ENCODE measurements at regions of chr4 and their contacts with region 1.

Region 1: GRCh38 chr4:10403633-10404445 is 53.4 kb downstream of the ZNF518B start:
- DNase-seq: peak; percentile 27
- H3K4me3 ChIP-seq: no peak overlapping the region
- H3K27ac ChIP-seq: no peak overlapping the region
- H3K4me1 ChIP-seq: no peaks in the 10 kb centered on the region
- H3K27me3 ChIP-seq: no peaks in the 10 kb centered on the region
- CTCF ChIP-seq: peak; percentile 31

Region 2: DNA sequence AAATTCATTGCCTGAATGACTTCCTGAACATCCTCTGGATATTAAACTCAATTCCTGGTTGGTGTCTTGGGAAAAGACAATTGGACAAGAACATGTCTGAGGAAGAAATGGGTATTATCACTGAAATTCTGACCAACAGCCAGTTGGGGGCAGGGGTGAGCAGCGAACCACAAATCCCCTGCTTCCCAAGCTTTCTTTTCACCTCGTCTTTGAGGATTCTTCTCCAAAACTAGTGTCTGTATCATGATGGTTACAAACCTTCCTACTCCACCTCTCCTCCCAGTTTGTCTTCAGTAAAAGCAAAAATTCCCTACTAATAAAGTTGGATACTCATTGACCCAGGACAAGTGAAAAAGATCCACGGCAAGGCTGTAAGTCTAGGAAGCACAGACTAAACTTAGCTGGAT is 239.0 kb before region 1 on chr4:
- intact Hi-C with region 1: loop called (anchors 10 kb)
- DNase-seq: peak; percentile 51
- H3K4me3 ChIP-seq: no peak overlapping the region
- H3K27ac ChIP-seq: no peak overlapping the region
- H3K4me1 ChIP-seq: peaks cover 6% of the 10 kb centered on the region
- H3K27me3 ChIP-seq: no peaks in the 10 kb centered on the region
- CTCF ChIP-seq: peak; percentile 44

Region 3: GRCh38 chr4:10478621-10479020 is 74.8 kb after region 1 on chr4:
- intact Hi-C with region 1: no loop called
- DNase-seq: no peak
- H3K4me3 ChIP-seq: no peak overlapping the region
- H3K27ac ChIP-seq: no peak overlapping the region
- H3K4me1 ChIP-seq: no peaks in the 10 kb centered on the region
- H3K27me3 ChIP-seq: no peaks in the 10 kb centered on the region
- CTCF ChIP-seq: no peak

Region 4: GRCh38 chr4:10554694-10555093 is 150.9 kb after region 1 on chr4:
- intact Hi-C with region 1: loop called (anchors 10 kb)
- DNase-seq: peak; percentile 58
- H3K4me3 ChIP-seq: no peak overlapping the region
- H3K27ac ChIP-seq: no peak overlapping the region
- H3K4me1 ChIP-seq: no peaks in the 10 kb centered on the region
- H3K27me3 ChIP-seq: no peaks in the 10 kb centered on the region
- CTCF ChIP-seq: peak; percentile 72